BJ (cell line): ENCODE measurements at regions of chr16 and their contacts with region 1.

Region 1: DNA sequence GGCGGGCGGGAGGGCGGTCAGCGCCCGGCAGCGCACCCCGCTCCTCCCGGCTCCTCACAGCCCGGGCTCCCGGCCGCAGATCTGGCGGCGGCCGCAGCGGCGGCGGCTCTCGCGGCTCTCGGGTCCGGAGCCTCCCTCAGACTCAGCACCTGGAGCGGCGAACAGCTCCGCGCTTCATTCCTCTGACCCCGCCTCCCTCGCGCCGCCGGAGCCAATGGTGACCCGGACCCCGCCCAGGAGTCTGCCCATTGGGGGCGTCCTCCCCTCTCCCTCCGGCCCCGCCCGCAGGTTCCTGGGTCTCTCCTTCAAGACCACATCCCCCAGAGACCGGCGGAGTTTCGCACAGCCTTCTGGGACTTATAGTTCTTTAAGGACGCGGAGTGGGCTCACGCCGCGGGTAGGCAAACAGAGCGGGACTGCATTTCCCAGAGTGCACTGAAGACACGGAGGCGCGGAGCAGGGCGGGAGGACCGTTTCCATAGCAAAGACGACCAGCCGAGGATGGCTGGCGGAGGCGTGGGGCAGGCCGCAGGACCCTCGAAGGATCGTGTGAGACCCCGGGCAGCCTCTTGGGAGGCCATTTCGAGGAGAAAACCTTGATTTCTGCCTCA is at the start of gene SMPD3:
- DNase-seq: peak; percentile 90
- H3K4me3 ChIP-seq: peak within 1 kb of the TSS; percentile 45
- H3K27me3 ChIP-seq: peaks cover 9% of the 10 kb centered on the region
- CTCF ChIP-seq: no peak
- polyA plus RNA-seq, gene SMPD3: 0.07 and 0.27 TPM in 2 replicates

Region 2: DNA sequence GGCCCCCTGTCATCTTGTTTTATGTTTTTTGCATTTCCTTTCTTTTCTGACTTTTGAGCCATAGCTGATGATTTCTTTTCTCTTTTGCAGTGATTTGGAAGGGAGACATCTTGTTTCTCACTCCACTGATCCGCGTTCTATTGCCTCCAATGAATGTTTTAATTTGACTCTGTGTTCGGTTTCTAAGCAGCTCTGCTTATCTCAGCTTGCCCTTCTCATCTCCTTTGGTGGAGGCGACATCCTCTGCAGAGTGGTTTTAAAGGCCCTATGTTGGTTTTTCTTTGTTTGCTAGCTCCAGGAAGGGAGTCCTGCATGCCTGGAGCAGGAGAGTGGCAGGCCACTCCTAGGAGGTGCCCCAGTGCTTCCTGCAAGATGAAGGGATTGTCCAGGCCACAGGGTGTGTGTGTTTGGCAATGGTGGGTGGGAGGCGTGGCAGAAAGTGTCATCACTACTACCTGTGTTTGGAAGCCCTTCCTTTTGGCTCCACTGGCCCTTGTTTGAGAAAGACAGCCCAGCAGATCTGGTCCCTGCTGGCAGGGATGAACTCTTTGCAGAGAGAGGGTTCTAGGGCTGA is 13.8 kb before region 1 on chr16:
- CTCF ChIA-PET with region 1: interaction called, 13 read pairs
- POLR2A ChIA-PET with region 1: no interaction called
- DNase-seq: no peak
- H3K4me3 ChIP-seq: no peak overlapping the region
- H3K27me3 ChIP-seq: peaks cover 11% of the 10 kb centered on the region
- CTCF ChIP-seq: no peak